Right cardiac atrium (tissue), 5 donors: ENCODE measurements at regions of chr2 and their contacts with region 1.

Region 1: DNA sequence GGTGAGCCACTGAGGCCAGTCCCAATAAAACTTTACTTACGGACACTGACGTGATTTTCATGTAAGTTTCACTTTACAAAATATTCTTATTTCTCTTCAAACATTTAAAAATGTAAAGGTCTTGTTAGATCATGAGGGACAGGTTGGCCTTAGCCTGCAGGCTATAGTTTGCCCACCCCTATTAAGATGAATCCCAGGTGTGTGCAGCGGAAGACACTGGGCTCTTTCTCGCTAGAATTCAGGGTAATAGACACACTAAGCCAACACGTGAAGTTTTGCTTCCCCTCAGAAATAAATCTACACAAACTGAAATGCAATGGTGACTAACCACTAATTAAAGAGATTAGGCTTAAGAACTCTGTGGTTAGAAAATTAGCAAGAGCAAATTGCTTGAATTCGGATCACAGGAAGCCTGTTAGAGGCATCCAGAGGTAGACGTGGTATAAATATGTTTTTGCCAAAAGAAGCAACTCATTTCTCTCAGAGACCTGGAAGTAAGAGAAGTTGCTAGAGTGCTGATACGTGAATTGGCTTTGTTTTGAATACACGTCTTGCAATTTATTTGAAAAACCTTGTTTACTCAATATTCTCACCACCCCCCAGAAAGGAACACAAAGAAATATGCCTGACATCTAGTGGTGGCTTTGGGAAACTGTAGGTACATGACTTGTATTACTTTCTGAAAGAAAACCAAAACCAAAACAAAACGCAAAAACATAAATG is 151.6 kb downstream of the DTNB start:
- DNase-seq: no peak
- ATAC-seq: peak; percentile 54 to 67
- H3K4me3 ChIP-seq: peak overlapping the region; percentile 46
- H3K27ac ChIP-seq: no peak overlapping the region
- H3K4me1 ChIP-seq: no peaks in the 10 kb centered on the region
- H3K27me3 ChIP-seq: no peaks in the 10 kb centered on the region

Region 2: GRCh38 chr2:25354116-25354515 is 167.7 kb before region 1 on chr2:
- intact Hi-C with region 1: loop called in 1 of 4 experiments (anchors 10 kb)
- DNase-seq: no peak
- ATAC-seq: no peak
- H3K4me3 ChIP-seq: no peak overlapping the region
- H3K27ac ChIP-seq: no peak overlapping the region
- H3K4me1 ChIP-seq: no peaks in the 10 kb centered on the region
- H3K27me3 ChIP-seq: no peaks in the 10 kb centered on the region

Region 3: GRCh38 chr2:25376750-25377621 is 144.8 kb before region 1 on chr2:
- intact Hi-C with region 1: loop called in 1 of 4 experiments (anchors 10 kb)
- DNase-seq: peak; percentile 87 to 95 (median 93)
- ATAC-seq: peak; percentile 97 to 98
- H3K4me3 ChIP-seq: no peak overlapping the region
- H3K27ac ChIP-seq: no peak overlapping the region
- H3K4me1 ChIP-seq: no peaks in the 10 kb centered on the region
- H3K27me3 ChIP-seq: no peaks in the 10 kb centered on the region

Region 4: DNA sequence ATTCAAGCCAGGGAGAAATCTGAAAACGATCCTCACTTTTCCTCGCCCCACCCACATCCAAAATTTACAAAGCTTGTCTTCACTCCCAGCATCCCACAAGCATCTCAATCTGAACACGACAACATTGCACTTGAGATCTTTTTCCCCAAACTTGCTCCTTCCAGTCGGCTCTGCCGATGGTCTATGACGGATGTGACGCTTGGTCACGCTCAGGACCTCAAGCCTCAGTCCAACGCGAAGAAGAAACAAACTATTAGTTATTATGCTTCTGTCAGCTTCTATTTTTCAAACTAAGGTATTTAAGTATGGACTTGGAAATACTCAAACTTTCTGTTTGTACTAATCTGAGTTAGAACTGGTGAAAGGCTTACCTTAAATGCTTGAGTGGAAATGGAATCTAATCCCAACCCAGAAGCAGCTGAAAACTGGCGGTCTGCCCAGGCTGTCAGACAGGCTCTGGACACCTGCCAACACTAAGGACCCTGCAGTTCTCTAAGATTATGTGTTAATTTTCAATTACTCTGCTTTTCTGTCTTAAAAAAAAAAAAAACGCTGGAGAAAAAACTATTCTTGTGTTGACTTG is 48.0 kb before region 1 on chr2:
- intact Hi-C with region 1: no loop called
- DNase-seq: peak; percentile 16 to 71 (median 57)
- ATAC-seq: no peak
- H3K4me3 ChIP-seq: no peak overlapping the region
- H3K27ac ChIP-seq: no peak overlapping the region
- H3K4me1 ChIP-seq: no peaks in the 10 kb centered on the region
- H3K27me3 ChIP-seq: no peaks in the 10 kb centered on the region